ENCODE measurements at regions of chr5 and their contacts with region 1.

Region 1: DNA sequence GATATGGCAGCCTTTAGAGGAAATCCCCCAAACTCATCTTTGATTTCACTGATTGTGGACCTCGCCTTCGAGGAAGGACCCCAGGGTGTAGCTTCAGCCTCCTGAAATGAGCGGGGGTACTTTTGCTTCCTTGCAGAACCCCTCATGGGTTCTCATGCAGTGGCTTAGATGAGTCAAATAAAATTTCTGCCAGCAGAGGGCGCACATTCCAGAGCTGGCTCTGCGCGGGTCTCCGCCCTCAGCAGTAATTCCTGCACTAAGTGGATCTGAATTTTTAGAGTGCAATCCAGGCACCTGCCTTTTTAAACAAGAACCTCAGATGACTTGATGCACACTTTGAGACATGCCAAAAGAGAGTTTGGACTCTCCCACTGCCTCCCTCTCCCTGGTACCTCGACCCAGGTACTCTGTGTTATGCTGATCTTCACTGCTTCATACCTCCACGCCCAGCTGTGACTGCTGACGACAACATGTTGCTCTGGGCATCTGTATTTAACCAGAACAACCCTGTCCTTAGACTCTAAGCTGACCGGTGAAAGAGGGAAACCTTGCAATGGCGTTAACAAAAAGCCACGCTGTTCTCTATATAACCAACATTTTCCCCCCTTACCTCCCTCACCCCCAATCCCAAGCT is 7.3 kb downstream of the EGFLAM start:
- DNase-seq: peak; percentile 27 to 67
- ATAC-seq: peak; percentile 70 to 84 (median 76)
- H3K4me3 ChIP-seq: no peak overlapping the region
- H3K27ac ChIP-seq: peak overlapping the region in 1 of 10 donors; percentile 6
- H3K4me1 ChIP-seq: peaks cover 0 to 11% (median 0%) of the 10 kb centered on the region in 9 donors
- H3K27me3 ChIP-seq: peaks cover 0 to 74% (median 45%) of the 10 kb centered on the region in 7 donors
- CTCF ChIP-seq: peak; percentile 56 to 86 (median 75)

Region 2: DNA sequence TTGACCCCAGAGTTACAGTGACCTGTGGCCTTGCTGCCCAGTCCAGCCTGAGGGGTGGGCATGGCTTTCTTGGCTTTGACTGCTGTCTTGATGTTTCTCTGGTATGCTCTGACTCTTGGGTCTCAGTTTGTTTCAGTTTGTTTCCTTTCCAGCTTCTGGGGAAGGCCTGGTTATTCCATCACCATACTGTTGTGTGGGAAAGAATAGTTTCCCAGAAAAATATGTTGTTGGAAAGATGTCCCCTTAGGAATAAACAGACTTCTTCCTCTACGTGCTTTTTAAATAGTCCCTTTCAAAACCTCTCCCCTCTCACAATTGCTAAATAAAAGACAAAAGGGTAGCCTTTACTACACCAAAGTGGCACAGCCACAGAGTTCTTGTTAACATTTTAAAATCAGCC is 42.2 kb after region 1 on chr5:
- intact Hi-C with region 1: loop called in 1 of 10 experiments (anchors 5 kb)
- DNase-seq: no peak
- ATAC-seq: peak in 6 of 8 donors; percentile 37 to 83 (median 48)
- H3K4me3 ChIP-seq: no peak overlapping the region
- H3K27ac ChIP-seq: peak overlapping the region in 8 of 10 donors; percentile 26 to 81 (median 66)
- H3K4me1 ChIP-seq: peaks cover 0 to 10% (median 0%) of the 10 kb centered on the region in 9 donors
- H3K27me3 ChIP-seq: no peaks in the 10 kb centered on the region
- CTCF ChIP-seq: no peak

Region 3: DNA sequence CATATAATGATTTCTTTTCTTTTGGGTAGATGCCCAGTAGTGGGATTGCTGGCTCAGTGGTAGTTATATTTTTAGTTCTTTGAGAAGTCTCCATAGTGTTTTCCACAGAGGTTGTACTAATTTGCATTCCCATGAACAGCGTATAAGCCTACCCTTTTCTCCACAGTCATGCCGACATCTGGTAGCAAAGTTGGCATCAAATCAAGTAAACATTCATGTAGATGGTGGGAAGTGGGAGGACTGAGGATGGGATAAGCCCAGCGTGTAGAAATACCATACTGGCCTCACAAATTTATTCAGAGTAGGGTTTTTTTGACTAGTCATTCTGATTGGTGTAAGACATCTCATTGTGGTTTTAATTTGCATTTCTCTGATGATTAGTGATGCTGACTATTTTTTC is 108.1 kb after region 1 on chr5:
- intact Hi-C with region 1: loop called in 1 of 10 experiments (anchors 5 kb)
- DNase-seq: no peak
- ATAC-seq: peak in 2 of 8 donors; percentile 14 to 19
- H3K4me3 ChIP-seq: no peak overlapping the region
- H3K27ac ChIP-seq: peak overlapping the region in 4 of 10 donors; percentile 25 to 46 (median 32)
- H3K4me1 ChIP-seq: peaks cover 0 to 3% (median 0%) of the 10 kb centered on the region in 9 donors
- H3K27me3 ChIP-seq: peaks cover 0 to 21% (median 5%) of the 10 kb centered on the region in 7 donors
- CTCF ChIP-seq: no peak

Region 4: DNA sequence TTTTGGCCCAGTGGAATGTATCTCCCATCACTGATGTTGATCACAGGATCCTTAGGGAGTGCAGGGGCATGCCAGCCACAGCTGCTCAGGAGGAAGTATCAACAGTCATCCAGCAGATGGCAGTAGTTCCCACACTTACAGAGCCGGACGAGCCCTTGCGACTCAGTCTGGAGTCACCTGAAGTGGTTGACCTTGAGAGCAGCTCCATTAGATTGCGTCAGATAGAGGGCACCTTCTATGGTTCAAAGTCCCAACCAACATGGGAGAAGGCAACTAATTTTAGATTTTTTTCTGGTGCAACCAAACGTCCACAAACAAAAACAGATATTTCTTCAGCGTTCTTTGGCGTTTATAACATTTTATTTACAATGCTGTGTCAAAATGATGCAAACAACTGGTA is 117.2 kb after region 1 on chr5:
- intact Hi-C with region 1: loop called in 1 of 10 experiments (anchors 10 kb)
- DNase-seq: peak; percentile 30 to 58
- ATAC-seq: peak; percentile 71 to 92 (median 81)
- H3K4me3 ChIP-seq: no peak overlapping the region
- H3K27ac ChIP-seq: no peak overlapping the region
- H3K4me1 ChIP-seq: peaks cover 0 to 6% (median 0%) of the 10 kb centered on the region in 9 donors
- H3K27me3 ChIP-seq: peaks cover 0 to 28% (median 6%) of the 10 kb centered on the region in 7 donors
- CTCF ChIP-seq: peak; percentile 51 to 85 (median 79)